Activated T-helper 2 cell treated with anti-CD3 and anti-CD28 coated beads, Interferon-gamma antibody, Interleukin-2, Interleukin-4, amounts not matched to agents 10 μg/mL and 5 μg/mL and 100 μg/mL, durations not matched to agents 14 hours and 24 hours and 36 hours (primary cell): ENCODE measurements at regions of chr17 and their contacts with region 1.

Region 1: DNA sequence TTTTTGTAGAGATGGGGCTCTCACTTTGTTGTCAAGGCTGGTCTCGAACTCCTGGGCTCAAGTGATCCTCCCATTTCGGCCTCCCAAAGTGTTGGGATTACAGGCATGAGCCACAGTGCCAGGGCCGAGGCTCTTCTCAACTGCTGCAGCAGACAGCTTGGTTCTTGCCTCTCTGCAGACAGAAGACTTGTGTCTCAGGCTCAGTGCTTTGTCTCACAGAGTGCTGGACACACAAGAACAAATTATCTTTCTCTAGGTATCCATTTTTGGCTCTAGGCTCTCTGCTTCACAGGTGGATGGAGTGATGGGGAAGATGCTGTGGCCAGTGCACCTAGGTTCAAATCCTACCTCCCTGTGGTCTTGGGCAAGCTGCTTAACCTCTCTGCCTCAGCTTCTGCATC is 80.8 kb upstream of the RNU2-1 start:
- DNase-seq: no peak
- H3K4me3 Mint-ChIP-seq: no peak overlapping the region
- H3K27ac Mint-ChIP-seq: no peak overlapping the region
- H3K4me1 Mint-ChIP-seq: peaks cover 8% of the 10 kb centered on the region
- H3K27me3 Mint-ChIP-seq: no peaks in the 10 kb centered on the region

Region 2: DNA sequence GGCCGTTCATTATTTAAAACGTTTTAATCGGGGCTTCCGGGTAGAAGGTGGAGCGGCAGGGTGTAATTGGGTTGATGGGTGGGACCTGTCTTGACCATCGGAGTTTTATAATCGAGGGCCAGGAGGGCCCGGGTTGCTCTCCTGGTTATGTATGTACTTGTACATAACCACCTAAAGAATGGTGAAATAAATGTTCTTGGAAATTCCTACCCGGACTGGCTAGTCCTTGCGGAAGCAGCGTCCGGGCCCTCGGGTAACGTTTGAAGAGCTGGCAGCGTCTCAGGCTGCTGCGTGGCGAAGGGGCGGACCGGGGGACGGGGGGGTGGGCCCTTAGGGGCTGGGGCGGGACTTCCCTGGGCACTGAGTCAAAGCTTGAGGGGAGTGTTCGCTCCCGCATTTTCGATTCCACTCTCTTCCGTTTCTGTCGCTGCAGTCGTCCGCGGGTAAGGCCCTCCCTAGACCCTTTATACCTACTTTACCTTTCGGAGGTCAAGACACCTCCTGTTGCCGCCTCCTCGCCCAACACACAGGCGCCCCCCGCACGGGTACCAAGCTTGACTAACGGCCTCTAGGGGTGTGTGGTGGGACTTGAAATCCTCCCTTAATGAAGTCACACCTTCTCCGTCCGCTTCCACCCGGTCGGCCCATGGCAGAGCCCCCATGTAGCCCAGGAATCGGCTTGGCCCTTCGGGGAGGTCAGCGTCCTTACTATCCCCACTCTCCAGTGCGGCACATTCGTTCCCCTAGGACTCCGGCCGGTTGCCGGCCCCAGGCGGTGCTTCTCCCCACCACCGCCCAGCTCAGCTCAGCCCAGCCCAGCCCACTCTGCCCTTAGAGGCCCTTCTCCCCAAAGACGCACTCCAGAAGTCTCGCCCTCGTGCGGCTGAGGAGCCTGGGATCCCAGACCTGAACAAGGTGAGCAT is 102.9 kb before region 1 on chr17 and contains the start of gene TMEM106A:
- intact Hi-C with region 1: loop called (anchors 1 kb)
- DNase-seq: peak; percentile 70
- H3K4me3 Mint-ChIP-seq: peak within 1 kb of the TSS; percentile 99
- H3K27ac Mint-ChIP-seq: peak within 1 kb of the TSS; percentile 93
- H3K4me1 Mint-ChIP-seq: peaks cover 29% of the 10 kb centered on the region
- H3K27me3 Mint-ChIP-seq: no peaks in the 10 kb centered on the region
- total RNA-seq, gene TMEM106A: 18.5 and 22.0 TPM in 2 replicates

Region 3: DNA sequence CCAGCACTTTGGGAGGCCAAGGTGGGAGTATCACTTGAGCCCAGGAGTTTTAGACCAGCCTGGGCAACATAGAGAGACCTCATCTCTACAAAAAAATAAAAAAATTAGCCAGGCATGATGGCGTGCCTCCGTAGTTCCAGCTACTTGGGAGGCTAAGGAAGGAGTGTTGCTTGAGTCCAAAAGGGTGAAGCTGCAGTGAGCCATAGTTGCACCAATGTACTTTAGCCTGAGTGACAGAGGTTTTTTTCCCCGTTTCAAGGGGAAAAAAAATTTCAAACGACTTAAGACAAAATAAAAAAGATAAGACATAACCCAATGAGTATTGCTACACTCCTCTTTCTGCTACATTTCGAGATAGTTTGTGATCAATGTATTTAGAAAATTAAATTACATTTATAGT is 176.0 kb after region 1 on chr17:
- intact Hi-C with region 1: no loop called
- DNase-seq: no peak
- H3K4me3 Mint-ChIP-seq: no peak overlapping the region
- H3K27ac Mint-ChIP-seq: no peak overlapping the region
- H3K4me1 Mint-ChIP-seq: peaks cover 6% of the 10 kb centered on the region
- H3K27me3 Mint-ChIP-seq: no peaks in the 10 kb centered on the region

Region 4: GRCh38 chr17:43791589-43791988 is 477.0 kb after region 1 on chr17:
- intact Hi-C with region 1: no loop called
- DNase-seq: no peak
- H3K4me3 Mint-ChIP-seq: no peak overlapping the region
- H3K27ac Mint-ChIP-seq: no peak overlapping the region
- H3K4me1 Mint-ChIP-seq: no peaks in the 10 kb centered on the region
- H3K27me3 Mint-ChIP-seq: peaks cover 29% of the 10 kb centered on the region